Activated CD4-positive, alpha-beta T cell treated with anti-CD3 and anti-CD28 coated beads for 36 hours (primary cell): ENCODE measurements at regions of chr7 and their contacts with region 1.

Region 1: GRCh38 chr7:154927624-154928143 is 75.2 kb downstream of the PAXIP1 start:
- DNase-seq: peak; percentile 88
- ATAC-seq: peak; percentile 65
- H3K4me3 Mint-ChIP-seq: peak overlapping the region; percentile 99
- H3K27ac Mint-ChIP-seq: peak overlapping the region; percentile 96
- H3K4me1 Mint-ChIP-seq: peaks cover 22% of the 10 kb centered on the region
- H3K27me3 Mint-ChIP-seq: no peaks in the 10 kb centered on the region

Region 2: GRCh38 chr7:154913638-154914312 is 13.9 kb before region 1 on chr7:
- CTCF ChIA-PET with region 1: interaction called, 34 read pairs
- POLR2A ChIA-PET with region 1: no interaction called
- intact Hi-C with region 1: no loop called
- DNase-seq: peak; percentile 94
- ATAC-seq: peak; percentile 99
- H3K4me3 Mint-ChIP-seq: peak overlapping the region; percentile 56
- H3K27ac Mint-ChIP-seq: no peak overlapping the region
- H3K4me1 Mint-ChIP-seq: peaks cover 5% of the 10 kb centered on the region
- H3K27me3 Mint-ChIP-seq: peaks cover 10% of the 10 kb centered on the region

Region 3: DNA sequence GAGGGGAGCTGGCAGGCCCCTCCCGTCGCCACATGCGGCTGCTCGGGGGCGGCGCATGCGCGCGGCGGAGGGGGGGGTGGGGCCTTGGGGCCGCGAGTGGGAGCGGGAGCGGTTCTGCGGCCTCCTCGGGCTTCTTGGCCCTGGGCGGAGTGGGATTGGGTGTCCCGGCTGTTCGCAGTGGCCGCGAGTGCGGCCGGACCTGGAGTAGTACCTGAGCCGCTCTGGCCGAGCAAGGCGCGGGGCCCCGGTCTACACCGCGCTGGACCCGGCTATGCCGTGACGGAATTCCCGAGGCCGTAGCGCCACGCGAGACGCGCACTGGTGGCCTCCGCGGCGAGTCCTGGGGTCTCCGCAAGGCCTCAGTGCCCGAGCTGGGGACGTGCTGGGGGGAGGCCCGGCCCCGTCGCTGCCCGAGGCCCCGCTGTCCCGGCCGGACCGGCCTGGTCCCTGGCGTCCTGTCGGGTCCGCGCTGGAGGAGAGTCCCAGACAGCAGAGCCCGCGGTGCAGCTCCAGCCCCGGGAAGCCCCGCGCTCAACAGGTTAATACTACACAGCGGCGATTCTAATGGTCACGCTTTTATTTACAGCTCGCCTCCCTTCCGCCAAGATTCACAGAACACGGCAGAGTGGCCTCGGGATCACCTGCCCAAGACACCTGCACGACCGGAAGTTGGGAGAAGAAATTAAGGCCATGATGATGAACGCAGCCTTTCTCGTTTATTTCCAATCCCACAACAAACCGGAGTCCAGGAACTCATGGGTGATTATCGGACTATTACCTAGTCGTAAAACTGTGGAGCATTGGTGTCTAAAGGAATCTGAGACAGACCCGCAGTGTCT is 75.9 kb after region 1 on chr7:
- CTCF ChIA-PET with region 1: interaction called, 10 read pairs
- POLR2A ChIA-PET with region 1: no interaction called
- intact Hi-C with region 1: loop called (anchors 1 to 5 kb)
- DNase-seq: peak; percentile 91
- ATAC-seq: peak; percentile 82
- H3K4me3 Mint-ChIP-seq: peak overlapping the region; percentile 91
- H3K27ac Mint-ChIP-seq: peak overlapping the region; percentile 85
- H3K4me1 Mint-ChIP-seq: peaks cover 12% of the 10 kb centered on the region
- H3K27me3 Mint-ChIP-seq: no peaks in the 10 kb centered on the region

Region 4: DNA sequence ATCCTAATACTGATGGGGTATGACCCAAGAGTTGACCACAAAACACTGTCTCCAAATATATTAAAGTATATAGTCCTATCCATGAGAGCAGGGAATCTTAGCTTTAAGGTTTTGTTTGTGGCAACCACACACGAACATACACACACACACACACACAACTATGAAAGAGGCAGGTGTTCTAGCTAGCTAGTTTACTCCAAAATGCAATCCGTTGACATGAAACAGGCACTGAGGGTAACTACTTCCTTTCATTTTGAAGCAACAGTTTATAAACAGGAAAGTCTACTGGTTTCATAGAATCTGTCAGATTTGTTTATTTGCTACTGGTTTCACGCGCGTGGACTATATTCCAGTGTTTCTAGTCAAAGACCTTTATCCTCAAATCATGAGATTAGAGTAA is 157.3 kb after region 1 on chr7:
- CTCF ChIA-PET with region 1: no interaction called
- POLR2A ChIA-PET with region 1: no interaction called
- intact Hi-C with region 1: no loop called
- DNase-seq: no peak
- ATAC-seq: no peak
- H3K4me3 Mint-ChIP-seq: no peak overlapping the region
- H3K27ac Mint-ChIP-seq: no peak overlapping the region
- H3K4me1 Mint-ChIP-seq: no peaks in the 10 kb centered on the region
- H3K27me3 Mint-ChIP-seq: peaks cover 17% of the 10 kb centered on the region

Region 5: DNA sequence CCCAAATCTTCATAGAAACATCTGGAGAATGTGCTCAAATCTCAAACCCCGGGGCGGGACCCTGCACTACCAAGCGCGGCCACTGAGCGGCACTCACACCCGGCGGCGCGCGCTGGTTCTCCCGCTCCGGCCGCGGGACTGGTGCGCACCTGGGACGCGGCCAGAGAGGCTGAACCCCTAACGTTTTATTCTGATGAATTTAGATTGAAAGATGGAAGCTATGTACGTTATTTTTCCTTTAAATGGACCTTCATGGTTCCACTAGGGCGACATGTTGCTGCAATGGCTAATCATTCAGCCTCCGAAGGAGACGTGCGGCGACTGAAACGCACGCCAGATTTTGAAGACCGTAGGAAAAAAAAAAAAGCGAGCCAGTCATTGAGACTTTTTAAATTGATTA is 263.0 kb after region 1 on chr7:
- CTCF ChIA-PET with region 1: interaction called, 6 read pairs
- POLR2A ChIA-PET with region 1: no interaction called
- intact Hi-C with region 1: loop called in 1 of 2 experiments (anchors 5 kb)
- DNase-seq: peak; percentile 82
- ATAC-seq: peak; percentile 64
- H3K4me3 Mint-ChIP-seq: no peak overlapping the region
- H3K27ac Mint-ChIP-seq: no peak overlapping the region
- H3K4me1 Mint-ChIP-seq: peaks cover 35% of the 10 kb centered on the region
- H3K27me3 Mint-ChIP-seq: peaks cover 5% of the 10 kb centered on the region

Region 6: DNA sequence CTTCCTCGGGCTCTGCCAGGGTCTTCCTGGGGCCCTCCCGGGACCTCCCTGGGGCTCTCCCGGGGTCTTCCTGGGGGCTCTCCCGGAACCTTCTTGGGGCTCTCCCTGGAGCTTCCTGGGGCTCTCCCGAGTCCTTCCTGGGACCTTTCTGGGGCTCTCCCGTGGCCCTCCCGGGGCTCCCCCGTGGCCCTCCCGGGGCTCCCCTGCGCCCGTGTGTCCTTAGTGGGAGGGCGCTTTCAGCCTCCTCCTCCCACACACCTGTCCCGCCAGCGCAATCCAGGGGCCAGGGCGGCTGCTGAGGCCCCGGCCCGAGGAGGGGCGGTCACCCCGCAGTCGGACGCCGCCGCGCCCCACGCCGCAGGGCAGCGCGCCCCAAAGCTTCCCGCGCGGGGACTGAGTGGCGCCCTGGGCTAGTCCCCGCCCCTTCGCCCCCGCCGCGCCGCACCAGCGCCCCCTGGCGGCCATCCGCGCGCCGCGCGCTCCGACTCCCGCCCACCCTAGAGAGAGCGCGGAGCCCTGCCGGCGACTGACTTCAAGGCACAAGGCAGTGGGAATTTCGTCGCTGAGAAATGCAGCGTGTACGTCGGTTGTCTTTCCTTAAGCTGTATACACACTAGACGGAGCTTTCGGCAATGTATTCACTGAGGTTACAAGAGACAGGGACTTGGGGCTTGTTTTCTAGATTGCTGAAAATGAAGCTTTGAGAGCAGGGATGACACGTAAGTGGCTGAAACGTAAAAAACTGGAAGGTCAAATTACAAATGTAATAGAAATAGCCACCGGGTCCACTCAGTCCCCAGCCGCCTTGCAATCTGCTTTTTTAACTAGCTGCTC is 417.1 kb after region 1 on chr7:
- CTCF ChIA-PET with region 1: interaction called, 21 read pairs
- POLR2A ChIA-PET with region 1: interaction called, 4 read pairs
- intact Hi-C with region 1: loop called (anchors 1 kb)
- DNase-seq: peak; percentile 89
- ATAC-seq: peak; percentile 86
- H3K4me3 Mint-ChIP-seq: peak overlapping the region; percentile 57
- H3K27ac Mint-ChIP-seq: peak overlapping the region; percentile 16
- H3K4me1 Mint-ChIP-seq: peaks cover 14% of the 10 kb centered on the region
- H3K27me3 Mint-ChIP-seq: peaks cover 4% of the 10 kb centered on the region

Region 7: DNA sequence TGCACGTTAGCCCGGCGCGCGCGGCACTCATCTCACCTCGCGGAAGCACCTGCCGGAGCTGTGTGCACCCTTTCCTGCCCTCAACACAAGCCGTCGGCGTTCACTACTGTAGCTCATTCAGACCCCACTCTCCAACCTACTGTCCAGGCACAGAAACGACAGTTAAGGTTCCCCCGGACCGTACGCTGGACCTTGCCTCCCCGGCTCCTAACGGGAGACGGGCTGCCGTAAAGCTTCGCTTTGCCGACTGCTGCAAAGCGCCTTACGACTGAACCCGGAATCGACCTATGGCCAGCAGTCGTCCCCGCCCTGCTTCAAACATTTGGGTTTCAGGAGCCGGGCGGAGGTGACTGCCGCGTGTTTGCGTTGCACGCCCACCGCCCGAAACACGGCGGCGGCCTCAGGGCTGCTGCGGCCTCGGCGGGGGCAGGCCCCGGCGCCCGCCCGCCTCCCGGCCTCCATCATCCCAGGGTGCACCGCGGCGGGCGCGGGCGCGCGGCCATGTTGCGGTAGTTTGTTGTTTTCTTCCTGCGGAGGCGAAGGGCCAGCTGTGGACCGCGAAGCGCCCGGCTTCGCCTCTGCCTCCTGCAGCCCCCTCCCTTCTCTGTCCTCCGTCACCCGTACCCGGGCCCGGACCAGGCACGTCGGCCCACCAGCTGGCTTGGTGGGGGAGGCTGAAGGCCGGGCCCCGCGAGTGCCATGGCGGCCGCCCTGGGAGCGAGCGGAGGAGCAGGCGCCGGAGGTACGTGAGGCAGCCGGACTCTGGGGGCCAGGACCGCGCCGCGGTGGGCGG is 716.7 kb after region 1 on chr7 and contains the start of gene RBM33:
- CTCF ChIA-PET with region 1: interaction called, 3 read pairs
- POLR2A ChIA-PET with region 1: no interaction called
- intact Hi-C with region 1: loop called in 1 of 2 experiments (anchors 2 kb)
- DNase-seq: peak; percentile 89
- ATAC-seq: peak; percentile 92
- H3K4me3 Mint-ChIP-seq: peak within 1 kb of the TSS; percentile 96
- H3K27ac Mint-ChIP-seq: peak within 1 kb of the TSS; percentile 100
- H3K4me1 Mint-ChIP-seq: peaks cover 44% of the 10 kb centered on the region
- H3K27me3 Mint-ChIP-seq: no peaks in the 10 kb centered on the region
- total RNA-seq, gene RBM33: 67.6 to 81.1 TPM